ENCODE measurements at regions of chr2 and their contacts with region 1.

Region 1: DNA sequence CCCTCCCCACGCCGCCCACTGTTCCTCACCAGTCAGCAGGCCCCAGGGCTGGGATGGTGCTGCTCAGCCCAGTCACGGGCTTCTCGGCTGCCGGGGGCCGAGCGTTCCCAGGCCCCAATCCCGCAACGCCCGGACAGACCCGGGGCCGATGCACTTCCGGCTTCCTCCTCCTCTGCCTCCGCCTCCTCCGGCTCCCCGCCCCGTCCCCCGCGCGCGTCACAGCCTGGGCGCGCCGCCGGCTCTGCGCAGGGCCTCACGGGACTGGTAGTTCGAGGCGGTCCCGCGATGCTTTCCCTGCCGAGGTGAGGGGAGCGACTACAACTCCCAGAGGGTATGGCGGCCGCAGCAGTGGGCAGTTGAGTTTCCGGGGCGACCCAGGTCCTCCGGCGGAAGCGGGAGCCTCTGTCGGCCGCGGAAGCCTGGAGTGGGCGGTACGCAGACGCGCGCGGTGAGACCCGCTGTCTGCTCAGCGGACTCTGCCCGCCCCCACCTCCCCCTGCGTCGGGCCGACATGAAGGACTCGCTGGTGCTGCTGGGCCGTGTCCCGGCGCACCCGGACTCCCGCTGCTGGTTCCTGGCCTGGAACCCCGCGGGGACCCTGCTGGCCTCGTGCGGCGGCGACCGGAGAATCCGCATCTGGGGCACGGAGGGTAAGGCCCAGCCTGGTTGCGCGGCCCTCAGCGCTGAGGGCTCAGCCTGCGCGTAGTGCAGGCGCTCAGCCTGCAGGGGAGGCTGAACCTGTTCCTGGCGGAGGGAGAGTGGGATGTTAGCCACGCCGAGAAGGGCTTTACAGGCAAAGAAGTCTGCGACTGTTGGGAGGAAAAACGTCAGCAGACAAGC is at the starts of genes CIAO1 and TMEM127:
- DNase-seq: peak; percentile 99
- H3K4me3 Mint-ChIP-seq: peak within 1 kb of the TSS; percentile 99
- H3K27ac Mint-ChIP-seq: peak within 1 kb of the TSS; percentile 86
- H3K4me1 Mint-ChIP-seq: peaks cover 47% of the 10 kb centered on the region
- H3K27me3 Mint-ChIP-seq: no peaks in the 10 kb centered on the region
- total RNA-seq, gene CIAO1: 59.9 to 62.2 TPM
- total RNA-seq, gene TMEM127: 12.9 to 16.1 TPM

Region 2: DNA sequence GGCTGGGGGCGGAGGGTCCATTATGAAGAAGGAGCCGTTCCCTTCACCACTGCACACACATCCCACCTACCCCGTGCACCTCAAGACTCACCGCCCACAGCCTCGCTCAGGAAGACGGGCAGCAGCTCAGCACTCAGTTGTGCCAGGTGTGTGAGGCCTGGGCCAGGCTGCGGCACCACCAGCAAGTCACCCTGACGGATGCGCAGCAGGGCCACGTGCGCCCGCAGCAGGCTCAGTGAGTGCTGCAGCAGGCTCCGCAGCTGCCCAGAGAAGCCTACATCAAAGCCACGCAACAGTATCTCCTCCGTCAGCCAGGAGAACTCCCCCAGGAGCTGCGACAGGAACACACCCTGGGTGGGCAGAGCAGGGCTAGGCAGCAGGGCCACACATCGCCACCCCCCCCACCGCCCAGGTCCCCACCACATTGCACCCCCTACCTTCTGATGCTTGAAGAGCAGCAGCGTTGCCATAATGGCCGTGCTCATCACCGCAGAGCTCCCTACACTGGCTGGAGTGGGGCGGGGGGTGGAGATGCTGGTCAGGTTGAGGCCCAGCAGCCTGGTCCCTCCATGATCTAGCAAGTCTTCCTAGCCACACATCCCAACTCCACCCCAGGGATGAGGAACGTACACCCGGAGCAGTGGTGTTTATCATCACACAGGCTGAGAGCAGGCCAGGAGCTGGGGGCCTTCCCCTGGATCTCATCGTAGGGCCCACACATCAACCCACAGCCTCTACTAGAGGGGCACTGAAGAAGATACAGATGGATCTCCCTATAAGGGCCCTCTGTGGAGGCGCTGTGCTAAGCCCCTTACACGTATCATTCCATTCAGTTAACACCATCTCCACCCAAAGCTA is 241.5 kb before region 1 on chr2:
- CTCF ChIA-PET with region 1: interaction called, 3 read pairs
- intact Hi-C with region 1: loop called (anchors 10 kb)
- DNase-seq: no peak
- H3K4me3 Mint-ChIP-seq: no peak overlapping the region
- H3K27ac Mint-ChIP-seq: no peak overlapping the region
- H3K4me1 Mint-ChIP-seq: peaks cover 2% of the 10 kb centered on the region
- H3K27me3 Mint-ChIP-seq: no peaks in the 10 kb centered on the region

Region 3: DNA sequence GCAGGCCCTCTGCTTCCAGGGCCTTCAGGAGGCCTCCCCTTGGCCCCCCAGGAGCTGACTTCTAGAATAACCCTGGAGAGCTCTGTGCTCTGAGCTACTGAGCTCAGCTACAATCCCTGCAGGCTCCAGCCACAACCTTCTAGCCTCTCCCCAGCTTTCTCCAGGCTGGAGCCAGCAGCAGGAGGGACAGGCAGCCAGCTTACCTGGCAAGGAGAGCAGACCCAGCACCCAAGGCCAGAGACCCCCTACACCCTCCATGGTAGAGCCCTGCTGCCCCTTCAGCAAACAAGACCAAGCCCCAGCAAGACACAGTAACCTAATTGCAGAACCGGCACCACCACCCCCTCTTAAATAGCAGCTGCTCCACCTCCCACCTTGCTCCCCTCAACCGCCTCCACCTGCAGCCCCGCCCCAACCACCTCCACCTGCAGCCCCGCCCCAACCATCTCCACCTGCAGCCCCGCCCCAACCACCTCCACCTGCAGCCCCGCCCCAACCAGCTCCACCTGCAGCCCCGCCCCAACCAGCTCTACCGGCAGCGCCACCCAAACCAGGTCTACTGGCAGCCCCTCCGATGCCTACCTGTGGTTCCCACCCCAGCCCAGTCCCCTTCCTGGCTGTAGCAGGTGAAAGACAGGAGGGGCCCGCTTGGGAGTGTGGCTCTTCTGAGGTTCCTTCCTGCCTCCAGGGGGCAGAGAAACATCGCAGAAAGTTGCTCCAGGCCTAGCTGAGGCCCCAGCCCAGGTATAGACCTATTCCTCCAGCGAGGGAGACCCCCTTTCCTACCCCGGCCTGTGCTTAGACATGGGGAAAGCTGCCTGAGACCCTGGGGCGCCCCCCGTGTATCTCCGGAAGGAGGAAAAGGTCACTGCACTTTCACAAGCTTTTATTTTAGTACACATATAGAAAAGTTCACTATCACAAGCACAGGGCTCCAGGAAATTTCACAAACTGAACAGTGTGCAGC is 127.6 kb before region 1 on chr2 and contains the start of gene ASTL:
- CTCF ChIA-PET with region 1: interaction called, 3 read pairs
- intact Hi-C with region 1: loop called (anchors 1 kb)
- DNase-seq: peak; percentile 88
- H3K4me3 Mint-ChIP-seq: no peak within 1 kb of the TSS
- H3K27ac Mint-ChIP-seq: peak within 1 kb of the TSS; percentile 82
- H3K4me1 Mint-ChIP-seq: peaks cover 24% of the 10 kb centered on the region
- H3K27me3 Mint-ChIP-seq: no peaks in the 10 kb centered on the region
- total RNA-seq, gene ASTL: 2.5 to 2.6 TPM

Region 4: GRCh38 chr2:96174251-96175144 is 91.6 kb before region 1 on chr2:
- CTCF ChIA-PET with region 1: interaction called, 17 read pairs
- intact Hi-C with region 1: no loop called
- DNase-seq: peak; percentile 92
- H3K4me3 Mint-ChIP-seq: no peak overlapping the region
- H3K27ac Mint-ChIP-seq: peak overlapping the region; percentile 52
- H3K4me1 Mint-ChIP-seq: peaks cover 17% of the 10 kb centered on the region
- H3K27me3 Mint-ChIP-seq: no peaks in the 10 kb centered on the region

Region 5: GRCh38 chr2:96241900-96242611 is 24.0 kb before region 1 on chr2:
- CTCF ChIA-PET with region 1: interaction called, 4 read pairs
- intact Hi-C with region 1: loop called (anchors 1 kb)
- DNase-seq: peak; percentile 84
- H3K4me3 Mint-ChIP-seq: no peak overlapping the region
- H3K27ac Mint-ChIP-seq: peak overlapping the region; percentile 88
- H3K4me1 Mint-ChIP-seq: peaks cover 43% of the 10 kb centered on the region
- H3K27me3 Mint-ChIP-seq: no peaks in the 10 kb centered on the region

Region 6: DNA sequence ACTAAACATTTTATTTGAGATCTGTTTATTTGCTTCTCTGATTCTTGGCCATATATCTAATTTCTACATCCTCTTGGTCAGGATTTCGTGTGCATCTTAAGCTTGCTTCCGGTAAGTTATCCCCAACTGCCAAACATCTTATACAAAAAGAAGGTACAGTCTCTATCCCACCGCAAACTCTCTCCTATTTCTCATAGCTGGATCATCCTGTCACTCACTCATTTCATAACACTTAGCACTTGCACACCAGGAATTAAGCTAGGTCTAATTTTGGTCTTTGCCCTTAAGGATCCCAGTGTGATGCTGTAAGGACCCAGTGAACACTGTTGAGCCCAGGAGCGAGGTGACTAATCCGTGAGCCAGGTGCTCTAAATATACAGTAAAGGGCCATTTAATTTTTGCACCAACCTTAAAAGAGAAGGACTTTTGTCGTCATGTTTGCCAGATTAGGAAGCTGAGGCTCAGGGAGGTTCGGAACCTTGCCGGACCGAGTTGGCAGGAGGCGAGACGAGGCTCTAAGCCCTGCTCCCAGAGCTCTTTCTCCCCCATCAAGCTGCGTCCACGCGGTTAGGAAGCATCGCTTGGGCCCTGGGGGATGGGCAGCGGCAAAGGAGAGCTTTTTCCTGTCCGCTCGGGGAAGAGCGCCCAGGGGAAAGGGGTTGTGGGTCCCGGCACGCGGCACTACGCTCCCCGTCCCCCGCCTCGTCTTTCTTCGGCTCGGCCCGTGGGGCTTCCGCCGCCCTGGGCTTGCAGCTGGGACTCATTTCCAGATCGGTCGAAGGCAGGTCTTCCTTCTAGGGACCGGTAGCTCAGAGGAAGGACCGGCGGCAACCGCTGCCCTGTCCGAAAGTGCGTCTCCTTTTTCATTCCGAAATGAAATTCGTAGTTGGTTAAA is 54.9 kb after region 1 on chr2:
- CTCF ChIA-PET with region 1: interaction called, 5 read pairs
- intact Hi-C with region 1: loop called (anchors 5 kb)
- DNase-seq: peak; percentile 36
- H3K4me3 Mint-ChIP-seq: peak overlapping the region; percentile 88
- H3K27ac Mint-ChIP-seq: peak overlapping the region; percentile 39
- H3K4me1 Mint-ChIP-seq: peaks cover 41% of the 10 kb centered on the region
- H3K27me3 Mint-ChIP-seq: peaks cover 2% of the 10 kb centered on the region

Region 7: GRCh38 chr2:96485751-96486651 is 219.9 kb after region 1 on chr2:
- CTCF ChIA-PET with region 1: no interaction called
- intact Hi-C with region 1: loop called (anchors 5 kb)
- DNase-seq: peak; percentile 94
- H3K4me3 Mint-ChIP-seq: peak overlapping the region; percentile 97
- H3K27ac Mint-ChIP-seq: peak overlapping the region; percentile 99
- H3K4me1 Mint-ChIP-seq: peaks cover 49% of the 10 kb centered on the region
- H3K27me3 Mint-ChIP-seq: no peaks in the 10 kb centered on the region

Measured in activated naive CD4-positive, alpha-beta T cell treated with anti-CD3 and anti-CD28 coated beads for 36 hours (primary cell).